ENCODE measurements at regions of chr17 and their contacts with region 1.

Region 1: GRCh38 chr17:915538-916201 is 63.9 kb downstream of the NXN start:
- DNase-seq: no peak

Region 2: GRCh38 chr17:846901-847843 is 68.5 kb before region 1 on chr17:
- intact Hi-C with region 1: loop called (anchors 5 kb)
- DNase-seq: no peak

Region 3: DNA sequence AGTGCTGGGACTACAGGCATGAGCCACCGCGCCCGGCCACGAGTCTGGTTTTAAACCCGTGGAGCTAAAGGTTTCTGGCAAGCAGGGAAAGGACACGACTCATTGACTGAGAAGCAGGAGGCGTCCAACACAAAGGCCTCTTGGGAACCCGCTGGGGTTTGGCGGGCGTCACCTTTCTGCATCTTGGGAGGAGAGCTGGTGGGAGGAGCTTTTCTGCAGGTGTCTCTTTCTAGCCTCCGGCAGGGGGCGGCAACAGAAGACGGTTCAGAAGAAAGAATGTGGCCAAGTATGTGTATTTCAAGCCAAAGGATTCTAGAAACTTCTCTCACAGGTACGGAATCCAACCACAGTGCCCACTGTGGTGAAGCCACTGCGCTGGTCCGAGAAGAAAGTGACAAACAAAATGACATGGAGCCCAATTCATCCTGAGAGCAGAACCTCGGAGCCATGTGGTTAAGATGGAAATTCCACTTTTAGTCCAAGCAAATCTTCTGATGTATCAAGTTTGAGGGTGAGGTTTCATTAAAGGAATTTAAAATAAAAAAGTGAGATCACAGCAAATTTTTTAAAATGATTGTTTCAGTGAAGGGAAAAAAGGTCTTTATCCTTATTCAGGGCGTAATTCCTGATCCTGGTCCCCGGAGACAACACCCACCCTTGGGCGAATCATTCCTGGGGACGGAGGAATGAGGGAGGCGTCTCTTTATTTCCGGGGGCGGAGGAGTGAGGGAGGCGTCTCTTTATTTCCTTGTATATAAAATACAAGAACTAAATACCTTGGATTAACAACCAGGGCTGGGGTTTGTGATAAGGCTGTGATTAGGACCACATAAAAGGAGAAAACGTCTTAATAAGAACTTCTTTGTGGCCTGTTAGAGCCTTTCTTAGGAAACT is 35.9 kb before region 1 on chr17:
- intact Hi-C with region 1: loop called (anchors 5 kb)
- DNase-seq: peak; percentile 85